Astrocyte of the cerebellum (primary cell): ENCODE measurements at regions of chr12 and their contacts with region 1.

Region 1: GRCh38 chr12:31728917-31729640 is at the start of gene AMN1:
- DNase-seq: peak; percentile 98
- H3K4me3 ChIP-seq: peak within 1 kb of the TSS; percentile 66
- CTCF ChIP-seq: peak; percentile 9

Region 2: DNA sequence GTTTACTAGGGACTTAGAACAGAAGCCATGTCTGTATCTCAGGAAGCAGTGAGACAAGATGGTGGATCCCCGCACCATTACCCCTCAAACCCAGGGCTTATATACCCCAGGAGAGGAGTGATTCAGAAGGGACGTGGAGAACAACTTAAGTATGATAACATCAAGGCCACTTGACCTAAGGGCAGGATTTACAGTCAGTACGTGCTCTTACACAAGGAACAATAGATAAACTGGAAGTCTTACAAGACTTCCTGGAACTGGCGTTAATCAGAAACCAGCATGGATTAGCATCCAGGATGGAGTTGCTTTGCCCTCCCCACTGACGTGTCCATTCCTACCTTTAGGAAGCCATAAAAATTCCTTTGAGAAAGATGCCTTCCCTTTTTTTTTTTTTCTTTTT is 78.2 kb before region 1 on chr12:
- in situ Hi-C with region 1: loop called (anchors 5 kb)
- DNase-seq: no peak
- H3K4me3 ChIP-seq: no peak overlapping the region
- CTCF ChIP-seq: no peak

Region 3: GRCh38 chr12:31801872-31802271 is 72.8 kb after region 1 on chr12:
- in situ Hi-C with region 1: no loop called
- DNase-seq: no peak
- H3K4me3 ChIP-seq: no peak overlapping the region
- CTCF ChIP-seq: no peak

Region 4: DNA sequence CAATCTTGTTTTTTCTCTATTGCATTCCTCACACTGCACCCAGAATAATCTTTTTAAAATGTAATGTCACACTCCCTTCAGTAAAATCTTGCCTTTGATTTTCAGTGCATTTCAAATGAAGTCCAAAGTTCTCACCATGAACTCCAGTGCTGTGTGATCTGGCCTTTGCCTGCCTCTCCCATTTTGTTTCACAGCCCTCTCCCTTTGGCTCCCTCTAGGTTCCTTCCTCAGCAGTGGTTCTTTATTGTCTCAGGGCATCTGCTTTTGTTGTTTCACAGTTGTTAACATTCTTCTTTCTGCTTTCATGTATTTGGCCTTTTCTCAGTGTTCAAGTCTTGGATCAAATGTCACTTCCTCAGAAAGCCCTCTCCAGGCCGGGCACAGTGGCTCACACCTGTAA is 84.2 kb after region 1 on chr12:
- in situ Hi-C with region 1: no loop called
- DNase-seq: no peak
- H3K4me3 ChIP-seq: no peak overlapping the region
- CTCF ChIP-seq: no peak